Ascending aorta (tissue), 2 donors: ENCODE measurements at regions of chr10 and their contacts with region 1.

Region 1: DNA sequence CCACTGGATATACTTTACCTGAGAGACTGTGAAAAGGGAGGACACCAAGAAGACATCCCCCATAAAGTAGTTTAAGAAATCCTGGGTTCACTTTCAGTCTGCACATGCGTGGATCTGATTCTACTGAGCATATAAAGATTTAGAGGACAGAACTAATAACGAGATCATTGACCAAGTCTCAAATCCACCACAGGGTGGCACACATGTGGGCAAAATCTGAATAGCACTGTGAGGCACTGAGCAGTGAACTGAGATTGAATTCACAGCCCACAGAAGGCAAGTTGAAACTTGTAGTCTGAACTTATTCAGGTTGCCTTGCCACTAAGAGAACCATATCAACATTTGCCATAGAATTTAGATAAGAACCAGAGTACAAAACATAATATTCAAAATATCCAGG is 818.6 kb downstream of the GRID1 start:
- DNase-seq: no peak
- H3K4me3 ChIP-seq: no peak overlapping the region
- H3K27ac ChIP-seq: no peak overlapping the region
- H3K4me1 ChIP-seq: no peaks in the 10 kb centered on the region
- H3K27me3 ChIP-seq: no peaks in the 10 kb centered on the region
- CTCF ChIP-seq: peak in 1 of 3 experiments; percentile 27

Region 2: DNA sequence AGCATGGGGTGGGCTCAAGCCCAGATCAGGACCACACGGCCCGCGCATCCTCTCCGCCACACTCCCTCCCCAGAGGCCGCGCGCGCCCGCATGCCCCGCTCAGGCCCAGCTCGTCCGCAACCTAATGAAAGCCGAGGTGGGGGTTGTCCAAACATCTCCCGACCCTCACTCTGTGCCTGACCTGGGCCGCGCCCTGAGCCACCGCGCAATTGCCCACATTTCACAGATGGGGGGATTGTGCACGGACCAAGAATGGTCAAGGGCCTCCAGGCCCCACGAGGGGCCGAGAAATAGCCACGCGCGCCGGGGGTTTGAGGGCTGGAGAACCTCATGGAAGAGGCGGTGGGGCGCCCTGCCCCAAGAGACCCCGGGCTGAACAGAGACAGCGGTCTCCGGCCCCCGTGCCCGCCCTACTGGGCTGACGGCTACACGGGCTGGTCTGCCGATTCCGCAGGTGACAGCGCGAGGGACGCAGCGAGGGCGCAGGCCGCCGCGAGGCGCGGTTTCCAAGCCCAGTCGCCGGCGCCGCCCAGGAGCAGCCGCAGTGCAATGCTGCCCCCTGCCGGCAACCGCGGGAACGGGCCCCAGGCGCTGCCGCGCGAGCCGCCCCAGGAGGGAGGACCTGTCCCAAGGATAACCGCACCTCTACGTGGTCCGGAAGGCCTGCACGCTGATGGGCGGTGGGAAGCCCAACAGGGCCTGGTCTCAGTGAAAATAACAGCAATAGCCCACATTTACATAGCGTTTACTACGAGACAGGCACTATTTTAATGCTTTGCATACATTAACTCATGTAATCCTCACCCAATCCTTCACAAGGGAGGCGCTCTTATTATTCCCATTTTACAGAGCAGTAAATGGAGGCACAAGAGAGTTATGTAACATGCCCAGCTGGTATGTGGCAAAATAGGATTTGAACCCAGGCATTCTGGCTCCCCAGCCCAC is 829.1 kb after region 1 on chr10:
- intact Hi-C with region 1: loop called (anchors 5 kb)
- DNase-seq: peak in 1 of 2 donors; percentile 80
- H3K4me3 ChIP-seq: peak overlapping the region in 1 of 2 donors; percentile 49
- H3K27ac ChIP-seq: no peak overlapping the region
- H3K4me1 ChIP-seq: peaks cover 3 to 6% of the 10 kb centered on the region in 2 donors
- H3K27me3 ChIP-seq: peaks cover 5% of the 10 kb centered on the region
- CTCF ChIP-seq: peak; percentile 81 to 98 (median 96)